Activated T-helper 1 cell treated with anti-CD3 and anti-CD28 coated beads, Interleukin-12 subunit alpha, Interleukin-12 subunit beta, Interleukin-2, Interleukin-4 antibody, amounts not matched to agents 30 ng/mL and 10 ng/mL and 1 ng/mL, durations not matched to agents 14 hours and 24 hours and 36 hours (primary cell): ENCODE measurements at regions of chr22 and their contacts with region 1.

Region 1: DNA sequence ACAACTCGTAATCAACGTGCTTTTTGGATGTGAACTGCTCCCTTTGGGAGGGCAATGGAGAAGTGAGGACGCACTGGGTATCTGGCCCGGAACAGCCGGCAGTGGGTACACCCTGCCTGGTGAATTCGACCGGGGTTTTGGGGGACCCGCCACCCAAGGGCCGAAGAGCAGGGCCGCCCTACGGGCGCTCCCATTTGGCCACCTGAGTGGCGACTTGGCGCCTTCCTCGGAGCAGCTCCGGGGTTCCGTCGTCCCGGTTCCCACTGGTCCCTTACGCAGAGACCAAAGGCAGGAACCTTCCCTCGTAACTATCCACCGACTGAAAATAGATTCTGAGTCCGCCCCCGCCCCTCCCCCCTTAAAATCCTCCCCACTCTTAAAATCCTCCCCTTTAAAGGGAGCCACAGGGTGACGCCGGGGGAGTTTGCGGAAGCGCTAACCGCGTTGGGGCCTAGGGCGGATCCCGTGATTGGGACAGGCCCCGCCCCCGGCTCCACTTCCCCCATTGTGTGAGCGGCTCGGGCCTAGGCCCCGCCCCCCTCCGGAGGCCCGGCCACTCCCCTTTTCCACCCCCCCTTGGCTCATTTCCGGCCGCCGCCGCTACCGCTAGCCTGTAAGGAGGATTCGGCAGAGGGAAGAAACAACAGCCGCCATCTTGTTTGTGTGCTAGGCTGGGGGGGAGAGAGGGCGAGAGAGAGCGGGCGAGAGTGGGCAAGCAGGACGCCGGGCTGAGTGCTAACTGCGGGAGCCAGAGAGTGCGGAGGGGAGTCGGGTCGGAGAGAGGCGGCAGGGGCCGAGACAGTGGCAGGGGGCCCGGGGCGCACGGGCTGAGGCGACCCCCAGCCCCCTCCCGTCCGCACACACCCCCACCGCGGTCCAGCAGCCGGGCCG is 1.0 kb upstream of the EP300 start:
- DNase-seq: peak; percentile 98
- H3K4me3 Mint-ChIP-seq: peak overlapping the region; percentile 100
- H3K27ac Mint-ChIP-seq: peak overlapping the region; percentile 100
- H3K4me1 Mint-ChIP-seq: peaks cover 30% of the 10 kb centered on the region
- H3K27me3 Mint-ChIP-seq: peaks cover 2% of the 10 kb centered on the region

Region 2: GRCh38 chr22:40856513-40857308 is 234.7 kb before region 1 on chr22 and contains the starts of genes ST13 and XPNPEP3:
- intact Hi-C with region 1: loop called (anchors 1 kb)
- DNase-seq: peak; percentile 96
- H3K4me3 Mint-ChIP-seq: peak within 1 kb of the TSS; percentile 98
- H3K27ac Mint-ChIP-seq: peak within 1 kb of the TSS; percentile 100
- H3K4me1 Mint-ChIP-seq: peaks cover 38% of the 10 kb centered on the region
- H3K27me3 Mint-ChIP-seq: no peaks in the 10 kb centered on the region
- total RNA-seq, gene ST13: 190 and 192 TPM in 2 replicates
- total RNA-seq, gene XPNPEP3: 14.7 and 15.3 TPM in 2 replicates

Region 3: GRCh38 chr22:41022470-41023298 is 68.7 kb before region 1 on chr22:
- intact Hi-C with region 1: loop called (anchors 1 kb)
- DNase-seq: peak; percentile 68
- H3K4me3 Mint-ChIP-seq: peak overlapping the region; percentile 82
- H3K27ac Mint-ChIP-seq: peak overlapping the region; percentile 1
- H3K4me1 Mint-ChIP-seq: peaks cover 7% of the 10 kb centered on the region
- H3K27me3 Mint-ChIP-seq: peaks cover 8% of the 10 kb centered on the region

Region 4: DNA sequence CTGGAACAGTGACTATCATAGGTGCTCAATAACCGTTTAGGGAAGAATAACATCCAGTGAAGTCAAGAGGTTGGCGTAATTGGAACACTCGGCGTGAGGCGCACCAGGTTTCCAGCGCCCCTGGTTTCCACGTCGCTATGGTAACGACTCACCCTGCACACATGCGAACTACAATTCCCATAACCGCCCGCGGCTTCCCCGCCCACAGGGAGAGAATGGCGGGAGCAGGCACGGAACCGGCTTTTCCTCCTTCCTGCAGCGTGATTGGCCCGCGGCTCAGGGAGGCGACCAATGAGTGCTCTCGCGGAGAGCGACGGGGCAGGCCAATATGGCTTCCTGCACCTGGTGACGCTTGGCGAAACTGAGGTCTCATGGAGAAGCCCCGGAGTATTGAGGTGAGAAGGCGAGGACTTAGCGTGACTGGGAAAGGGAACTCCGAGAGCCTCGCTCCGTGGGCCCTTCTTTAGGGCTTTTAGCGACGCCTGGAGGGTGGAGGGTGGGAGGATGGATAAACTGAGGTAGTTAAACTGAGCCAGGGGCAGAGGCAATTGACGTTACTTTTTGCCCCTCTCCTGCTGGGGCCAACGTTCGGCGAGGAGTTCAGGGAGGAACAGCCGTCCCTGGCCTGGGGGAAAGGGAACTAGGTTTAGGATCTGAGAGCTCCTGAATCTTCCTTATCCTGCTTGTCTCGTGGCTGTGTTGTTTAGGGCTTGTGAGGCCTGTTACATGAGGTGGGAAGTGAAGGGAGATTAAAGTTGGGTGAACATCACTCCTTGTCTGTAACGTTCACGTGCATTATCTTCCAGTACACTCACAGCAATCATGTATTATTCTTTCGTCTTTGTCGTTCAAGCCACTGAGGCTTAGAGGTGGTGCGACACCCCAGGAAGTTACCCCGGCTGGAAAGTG is 113.9 kb after region 1 on chr22 and contains the start of gene L3MBTL2:
- intact Hi-C with region 1: loop called (anchors 1 kb)
- DNase-seq: peak; percentile 98
- H3K4me3 Mint-ChIP-seq: peak within 1 kb of the TSS; percentile 97
- H3K27ac Mint-ChIP-seq: peak within 1 kb of the TSS; percentile 94
- H3K4me1 Mint-ChIP-seq: peaks cover 21% of the 10 kb centered on the region
- H3K27me3 Mint-ChIP-seq: peaks cover 12% of the 10 kb centered on the region
- total RNA-seq, gene L3MBTL2: 51.9 and 56.6 TPM in 2 replicates

Region 5: GRCh38 chr22:41381329-41382097 is 290.1 kb after region 1 on chr22 and contains the start of gene TEF:
- intact Hi-C with region 1: loop called (anchors 1 kb)
- DNase-seq: peak; percentile 97
- H3K4me3 Mint-ChIP-seq: peak within 1 kb of the TSS; percentile 85
- H3K27ac Mint-ChIP-seq: peak within 1 kb of the TSS; percentile 93
- H3K4me1 Mint-ChIP-seq: peaks cover 6% of the 10 kb centered on the region
- H3K27me3 Mint-ChIP-seq: no peaks in the 10 kb centered on the region
- total RNA-seq, gene TEF: 1.6 and 2.1 TPM in 2 replicates